Activated T-helper 1 cell treated with anti-CD3 and anti-CD28 coated beads, Interleukin-12 subunit alpha, Interleukin-12 subunit beta, Interleukin-2, Interleukin-4 antibody, amounts not matched to agents 30 ng/mL and 10 ng/mL and 1 ng/mL, durations not matched to agents 14 hours and 24 hours and 36 hours (primary cell): ENCODE measurements at regions of chr3 and their contacts with region 1.

Region 1: DNA sequence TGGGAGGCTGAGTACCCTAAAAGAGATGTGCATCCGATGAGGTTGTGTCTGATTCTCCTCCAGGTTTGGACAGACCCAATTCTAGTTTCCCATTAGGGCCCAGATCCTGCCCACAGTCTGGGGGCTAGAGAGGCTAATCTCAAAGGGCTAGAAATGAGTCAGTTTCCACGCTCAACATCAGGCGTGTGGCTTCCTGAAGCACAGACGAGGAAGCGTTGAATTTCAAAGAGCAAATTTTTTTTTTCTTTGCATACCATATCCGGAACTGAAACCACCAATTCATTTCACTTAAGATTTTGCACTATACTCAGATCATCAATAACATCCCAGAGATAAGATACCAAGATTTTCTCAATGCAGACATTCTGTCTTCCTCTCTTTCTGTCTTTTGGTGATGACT is 173.8 kb upstream of the BCL6 start:
- DNase-seq: peak; percentile 67
- H3K4me3 Mint-ChIP-seq: peak overlapping the region; percentile 62
- H3K27ac Mint-ChIP-seq: peak overlapping the region; percentile 93
- H3K4me1 Mint-ChIP-seq: peaks cover 86% of the 10 kb centered on the region
- H3K27me3 Mint-ChIP-seq: peaks cover 3% of the 10 kb centered on the region

Region 2: DNA sequence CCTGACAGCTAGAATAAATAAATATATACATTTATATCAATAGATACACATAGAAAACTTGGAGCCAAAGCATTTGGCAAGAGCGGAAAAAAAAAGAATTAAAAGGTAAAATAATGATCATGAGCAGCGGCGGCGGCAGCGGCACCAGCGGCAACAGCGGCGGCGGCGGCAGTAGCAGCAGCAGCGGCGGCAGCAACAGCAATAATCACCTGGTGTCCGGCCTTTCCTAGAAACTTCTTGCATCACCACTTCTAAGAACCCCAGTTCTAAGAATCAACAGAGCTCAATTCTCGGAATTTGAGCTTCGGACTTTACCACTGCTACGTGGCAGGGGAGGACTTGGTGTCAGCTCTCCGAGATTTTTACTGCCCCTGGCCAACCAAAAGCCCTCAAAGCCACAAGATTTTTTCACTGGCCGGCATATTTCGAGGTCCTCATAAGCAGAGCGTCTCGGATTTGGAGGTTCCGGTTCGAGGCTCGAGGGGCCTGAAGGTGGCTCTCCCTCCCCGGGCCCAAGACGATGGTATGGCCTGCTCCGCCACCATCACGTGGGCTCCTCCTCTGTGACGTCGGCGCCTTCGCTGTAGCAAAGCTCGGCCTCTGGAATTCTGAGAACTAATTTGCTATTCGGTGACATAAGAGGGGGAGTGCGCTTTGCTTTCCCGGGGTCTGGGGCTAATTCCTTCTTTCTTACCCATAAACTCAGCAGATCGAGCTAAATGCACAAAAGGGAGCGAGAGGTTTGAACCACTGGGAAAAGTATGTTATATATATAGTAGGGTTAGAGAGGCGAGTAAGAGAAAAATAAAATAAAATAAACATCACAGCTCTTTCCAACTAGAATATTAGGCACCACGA is 173.6 kb before region 1 on chr3 and contains the start of gene BCL6:
- intact Hi-C with region 1: loop called (anchors 1 kb)
- DNase-seq: peak; percentile 88
- H3K4me3 Mint-ChIP-seq: peak within 1 kb of the TSS; percentile 96
- H3K27ac Mint-ChIP-seq: peak within 1 kb of the TSS; percentile 98
- H3K4me1 Mint-ChIP-seq: peaks cover 73% of the 10 kb centered on the region
- H3K27me3 Mint-ChIP-seq: no peaks in the 10 kb centered on the region
- total RNA-seq, gene BCL6: 38.8 and 42.1 TPM in 2 replicates

Region 3: DNA sequence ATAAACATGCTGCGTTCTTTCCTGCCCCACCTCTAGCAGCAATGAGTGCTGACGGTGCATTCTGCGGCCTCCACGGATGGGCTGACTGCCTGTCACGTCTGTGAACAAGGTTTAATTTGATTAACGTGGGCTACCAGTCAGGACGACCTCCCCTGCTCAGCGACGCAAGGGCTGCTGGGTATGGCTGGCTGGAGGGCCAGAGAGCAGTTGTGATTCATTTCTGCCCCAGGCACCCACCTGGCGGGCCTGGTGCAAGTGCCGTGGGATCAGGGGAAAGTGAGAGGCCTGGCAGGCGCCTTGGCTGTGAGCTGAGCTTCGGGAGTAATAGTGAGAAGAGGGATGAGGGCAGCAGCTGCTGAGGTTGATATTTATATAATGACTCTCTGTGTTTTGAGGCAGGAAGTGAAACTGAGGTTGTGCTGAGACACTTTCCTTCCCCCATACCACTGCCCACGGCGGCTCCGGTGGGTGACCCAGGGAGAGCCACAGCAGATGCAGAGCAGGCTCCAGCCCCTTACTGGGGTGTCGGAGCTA is 16.6 kb after region 1 on chr3:
- intact Hi-C with region 1: loop called (anchors 1 kb)
- DNase-seq: no peak
- H3K4me3 Mint-ChIP-seq: peak overlapping the region; percentile 40
- H3K27ac Mint-ChIP-seq: no peak overlapping the region
- H3K4me1 Mint-ChIP-seq: peaks cover 19% of the 10 kb centered on the region
- H3K27me3 Mint-ChIP-seq: peaks cover 13% of the 10 kb centered on the region

Region 4: DNA sequence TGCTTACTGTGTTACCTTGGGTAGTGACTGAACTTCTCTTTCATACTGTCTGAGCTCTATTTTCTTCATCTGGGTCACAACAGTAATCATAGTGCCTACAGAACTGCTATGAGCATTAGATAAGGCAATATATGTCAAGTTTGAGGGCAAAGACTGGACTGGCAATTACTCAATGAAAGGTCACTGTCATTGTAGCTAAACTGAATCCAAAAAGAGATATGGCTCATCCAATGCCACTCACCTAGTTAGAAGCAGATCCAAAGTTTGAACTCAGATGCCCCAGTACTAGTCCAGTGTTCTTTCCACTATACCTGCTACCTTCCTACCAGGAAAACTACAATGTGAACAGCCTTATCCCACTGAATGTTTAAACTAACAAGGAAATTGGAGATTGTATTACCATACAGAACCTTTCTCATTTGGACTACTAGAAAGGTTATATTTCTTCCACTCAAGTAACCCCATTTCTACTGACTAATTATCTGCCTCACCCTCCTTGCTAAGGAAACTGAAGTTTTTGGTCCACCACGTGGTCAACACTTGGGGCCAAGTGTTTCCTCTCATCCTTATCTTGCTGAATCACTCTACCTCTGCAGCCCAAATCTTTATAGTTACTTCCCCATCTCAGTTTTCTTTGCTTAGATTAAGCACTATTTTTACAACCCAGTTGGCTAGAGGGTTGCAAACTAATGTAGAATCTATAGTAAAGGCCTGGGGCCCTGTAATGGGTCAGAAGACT is 32.6 kb after region 1 on chr3:
- intact Hi-C with region 1: no loop called
- DNase-seq: no peak
- H3K4me3 Mint-ChIP-seq: no peak overlapping the region
- H3K27ac Mint-ChIP-seq: no peak overlapping the region
- H3K4me1 Mint-ChIP-seq: peaks cover 46% of the 10 kb centered on the region
- H3K27me3 Mint-ChIP-seq: no peaks in the 10 kb centered on the region

Region 5: GRCh38 chr3:187982142-187982541 is 63.1 kb after region 1 on chr3:
- intact Hi-C with region 1: no loop called
- DNase-seq: no peak
- H3K4me3 Mint-ChIP-seq: no peak overlapping the region
- H3K27ac Mint-ChIP-seq: no peak overlapping the region
- H3K4me1 Mint-ChIP-seq: peaks cover 65% of the 10 kb centered on the region
- H3K27me3 Mint-ChIP-seq: no peaks in the 10 kb centered on the region

Region 6: GRCh38 chr3:188154014-188154808 is 235.2 kb after region 1 on chr3 and contains the start of gene LPP:
- intact Hi-C with region 1: loop called (anchors 1 kb)
- DNase-seq: peak; percentile 90
- H3K4me3 Mint-ChIP-seq: peak within 1 kb of the TSS; percentile 89
- H3K27ac Mint-ChIP-seq: peak within 1 kb of the TSS; percentile 87
- H3K4me1 Mint-ChIP-seq: peaks cover 71% of the 10 kb centered on the region
- H3K27me3 Mint-ChIP-seq: no peaks in the 10 kb centered on the region
- total RNA-seq, gene LPP: 38.2 and 46.4 TPM in 2 replicates

Region 7: DNA sequence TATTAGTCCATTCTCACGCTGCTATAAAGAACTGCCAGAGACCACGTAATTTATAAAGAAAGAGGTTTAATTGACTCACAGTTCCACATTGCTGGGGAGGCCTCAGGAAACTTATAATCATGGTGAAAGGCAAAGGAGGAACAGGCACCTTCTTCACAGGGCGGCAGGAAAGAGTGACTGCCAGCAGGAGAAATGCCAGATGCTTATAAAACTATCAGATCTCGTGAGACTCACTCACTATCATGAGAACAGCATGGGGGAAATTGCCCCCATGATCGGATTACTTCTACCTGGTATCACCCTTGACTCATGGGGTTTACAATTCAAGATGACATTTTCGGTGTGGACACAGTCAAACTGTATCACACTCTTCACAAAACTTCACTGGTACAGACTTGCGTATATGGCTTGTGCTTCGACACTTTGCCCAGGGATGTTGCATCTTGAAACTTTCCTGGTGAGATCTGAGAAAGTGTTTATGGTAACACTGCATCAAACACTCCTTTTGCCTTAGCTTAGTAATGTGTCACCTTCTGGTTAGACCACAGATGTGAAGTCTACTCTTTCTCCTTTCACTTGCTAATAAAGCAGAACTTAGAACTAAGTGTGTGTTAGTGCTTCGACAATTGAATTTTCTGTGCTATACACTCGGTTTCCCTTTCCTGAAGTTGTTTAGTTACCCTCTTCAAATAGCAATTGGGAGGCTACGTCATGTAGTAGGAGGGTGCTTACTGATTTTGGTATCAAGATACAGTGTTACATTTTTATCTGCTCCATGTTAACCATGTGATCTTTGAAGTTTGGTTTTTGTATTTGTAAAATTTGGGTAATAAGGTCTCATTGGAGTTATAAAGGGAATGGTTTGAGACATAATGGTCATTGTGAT is 420.6 kb after region 1 on chr3:
- intact Hi-C with region 1: loop called (anchors 1 kb)
- DNase-seq: peak; percentile 39
- H3K4me3 Mint-ChIP-seq: peak overlapping the region; percentile 63
- H3K27ac Mint-ChIP-seq: peak overlapping the region; percentile 86
- H3K4me1 Mint-ChIP-seq: peaks cover 37% of the 10 kb centered on the region
- H3K27me3 Mint-ChIP-seq: peaks cover 24% of the 10 kb centered on the region

Region 8: DNA sequence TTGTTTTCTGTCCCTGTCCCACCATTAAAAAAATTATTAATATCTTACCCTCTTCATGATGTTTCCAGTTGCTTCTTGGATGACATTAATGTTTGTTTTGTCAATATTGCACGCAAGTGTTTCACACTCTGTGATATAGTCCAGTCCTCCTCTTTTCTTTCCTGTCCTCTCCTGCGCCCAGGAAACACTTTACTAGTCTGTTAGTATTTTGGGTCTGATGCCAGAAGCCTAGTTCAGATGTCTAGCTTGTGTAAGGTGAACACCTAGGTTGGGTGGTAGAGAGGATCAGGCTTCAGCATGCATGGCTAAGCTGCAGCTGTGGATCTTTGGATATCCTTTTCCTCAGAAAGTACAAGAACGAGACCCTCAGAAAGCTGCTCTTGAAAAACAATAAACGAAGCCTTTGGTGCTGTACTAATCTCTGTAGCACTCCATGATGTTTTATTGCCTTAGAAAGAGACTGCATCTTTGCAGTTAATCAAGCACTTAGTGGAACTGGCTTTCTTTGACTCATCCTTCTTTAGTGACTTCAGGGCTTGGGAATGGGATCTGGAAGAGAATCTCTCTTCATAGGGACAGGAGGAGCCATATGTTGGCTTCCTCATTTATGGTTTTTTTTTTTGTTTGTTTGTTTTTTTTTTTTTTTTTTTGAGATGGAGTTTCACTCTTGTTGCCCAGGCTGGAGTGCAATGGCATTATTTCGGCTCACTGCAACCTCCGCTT is 488.3 kb after region 1 on chr3:
- intact Hi-C with region 1: no loop called
- DNase-seq: no peak
- H3K4me3 Mint-ChIP-seq: no peak overlapping the region
- H3K27ac Mint-ChIP-seq: no peak overlapping the region
- H3K4me1 Mint-ChIP-seq: peaks cover 20% of the 10 kb centered on the region
- H3K27me3 Mint-ChIP-seq: no peaks in the 10 kb centered on the region

Region 9: DNA sequence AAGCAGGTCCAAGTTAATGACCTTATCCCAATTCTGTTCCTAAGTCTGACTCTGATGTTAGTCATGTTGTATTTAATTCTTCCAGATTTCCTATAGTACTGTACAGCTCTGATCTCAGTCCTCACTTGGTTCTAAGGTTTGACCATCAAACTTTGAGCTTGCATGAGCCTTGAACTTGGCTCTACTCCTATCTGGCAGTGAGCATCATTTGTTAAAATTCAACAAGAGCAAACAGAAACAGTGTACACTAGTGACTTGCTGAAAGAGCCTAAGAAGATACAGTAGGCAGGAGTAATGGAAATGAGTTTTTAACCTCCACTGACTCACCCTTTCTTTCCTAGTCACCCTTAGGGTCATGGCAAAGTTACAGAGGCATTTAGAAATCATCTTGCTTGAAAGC is 801.6 kb after region 1 on chr3:
- intact Hi-C with region 1: loop called (anchors 10 kb)
- DNase-seq: no peak
- H3K4me3 Mint-ChIP-seq: no peak overlapping the region
- H3K27ac Mint-ChIP-seq: no peak overlapping the region
- H3K4me1 Mint-ChIP-seq: peaks cover 35% of the 10 kb centered on the region
- H3K27me3 Mint-ChIP-seq: peaks cover 2% of the 10 kb centered on the region

Region 10: DNA sequence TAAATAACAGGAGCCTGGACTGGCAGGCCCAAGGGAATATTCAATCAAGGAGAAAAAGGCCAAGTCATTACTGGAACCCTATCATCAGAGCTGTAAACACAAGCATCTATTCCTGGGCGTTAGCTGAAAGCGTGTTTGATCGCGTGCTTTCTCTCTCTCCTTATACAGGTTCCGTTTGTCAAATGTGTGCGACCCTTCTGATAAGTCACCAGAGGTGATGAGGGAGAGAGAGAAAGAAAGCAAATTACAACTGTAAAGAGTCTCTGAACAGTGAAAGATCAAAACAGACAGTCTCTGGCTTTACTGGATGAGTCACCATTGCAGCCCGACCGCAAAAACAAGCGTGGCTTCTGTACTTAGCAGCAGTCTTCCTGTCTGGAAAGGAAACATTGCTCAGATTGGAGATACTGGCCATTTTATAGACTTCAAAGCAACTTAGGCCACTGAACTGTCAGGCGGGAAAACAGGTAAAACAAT is 1213.2 kb after region 1 on chr3:
- intact Hi-C with region 1: loop called (anchors 1 kb)
- DNase-seq: peak; percentile 75
- H3K4me3 Mint-ChIP-seq: peak overlapping the region; percentile 69
- H3K27ac Mint-ChIP-seq: peak overlapping the region; percentile 76
- H3K4me1 Mint-ChIP-seq: peaks cover 28% of the 10 kb centered on the region
- H3K27me3 Mint-ChIP-seq: no peaks in the 10 kb centered on the region